HEK293 (cell line): ENCODE measurements at regions of chr12 and their contacts with region 1.

Region 1: GRCh38 chr12:113048716-113049127 is 7.8 kb upstream of the DTX1 start:
- H3K4me3 ChIP-seq: no peak overlapping the region
- H3K27ac ChIP-seq: no peak overlapping the region
- H3K4me1 ChIP-seq: no peaks in the 10 kb centered on the region
- CTCF ChIP-seq: peak; percentile 56; the same call in 1 of the 2 replicates

Region 2: DNA sequence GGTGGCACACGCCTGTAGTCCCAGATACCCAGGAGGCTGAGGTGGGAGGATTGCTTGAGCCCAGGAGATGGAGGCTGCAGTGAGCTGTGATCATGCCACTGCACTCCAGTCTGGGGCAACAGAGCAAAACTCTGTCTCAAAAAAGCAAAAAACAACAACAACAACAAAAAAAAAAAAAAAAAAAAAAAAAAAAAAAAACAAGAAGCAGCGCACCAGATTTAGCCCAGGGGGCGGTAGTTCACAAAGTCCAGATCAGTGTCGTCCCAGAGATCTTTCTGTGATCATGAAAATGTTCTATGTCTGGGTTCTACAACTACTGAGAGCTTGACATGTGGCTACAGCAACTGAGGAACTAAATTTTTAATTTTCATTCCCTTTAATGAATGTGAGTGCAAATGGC is 43.0 kb before region 1 on chr12:
- CTCF ChIA-PET with region 1: interaction called, 15 read pairs
- POLR2A ChIA-PET with region 1: no interaction called
- H3K4me3 ChIP-seq: no peak overlapping the region
- H3K27ac ChIP-seq: no peak overlapping the region
- H3K4me1 ChIP-seq: no peaks in the 10 kb centered on the region
- CTCF ChIP-seq: 0 out of 2 replicates have a peak, but pooled peaks have one; percentile 15

Region 3: GRCh38 chr12:113098446-113098896 is 49.7 kb after region 1 on chr12:
- CTCF ChIA-PET with region 1: interaction called, 41 read pairs
- POLR2A ChIA-PET with region 1: no interaction called
- H3K4me3 ChIP-seq: no peak overlapping the region
- H3K27ac ChIP-seq: no peak overlapping the region
- H3K4me1 ChIP-seq: no peaks in the 10 kb centered on the region
- CTCF ChIP-seq: peak; percentile 79

Region 4: GRCh38 chr12:113161414-113162016 is 112.8 kb after region 1 on chr12:
- CTCF ChIA-PET with region 1: interaction called, 13 read pairs
- POLR2A ChIA-PET with region 1: no interaction called
- H3K4me3 ChIP-seq: no peak overlapping the region
- H3K27ac ChIP-seq: no peak overlapping the region
- H3K4me1 ChIP-seq: no peaks in the 10 kb centered on the region; the same call in 1 of the 2 replicates
- CTCF ChIP-seq: no peak

Region 5: GRCh38 chr12:113918306-113918705 is 869.6 kb after region 1 on chr12:
- CTCF ChIA-PET with region 1: no interaction called
- POLR2A ChIA-PET with region 1: interaction called, 10 read pairs
- H3K4me3 ChIP-seq: no peak overlapping the region
- H3K27ac ChIP-seq: no peak overlapping the region
- H3K4me1 ChIP-seq: no peaks in the 10 kb centered on the region
- CTCF ChIP-seq: no peak